Activated T-helper 2 cell treated with anti-CD3 and anti-CD28 coated beads, Interferon-gamma antibody, Interleukin-2, Interleukin-4, amounts not matched to agents 10 μg/mL and 5 μg/mL and 100 μg/mL, durations not matched to agents 14 hours and 24 hours and 36 hours (primary cell): ENCODE measurements at regions of chr12 and their contacts with region 1.

Region 1: GRCh38 chr12:70733385-70733784 is 96.2 kb upstream of the PTPRB start:
- DNase-seq: no peak
- H3K4me3 Mint-ChIP-seq: no peak overlapping the region
- H3K27ac Mint-ChIP-seq: no peak overlapping the region
- H3K4me1 Mint-ChIP-seq: no peaks in the 10 kb centered on the region
- H3K27me3 Mint-ChIP-seq: peaks cover 4% of the 10 kb centered on the region

Region 2: GRCh38 chr12:69879041-69879960 is 854.1 kb before region 1 on chr12:
- intact Hi-C with region 1: loop called (anchors 5 kb)
- DNase-seq: peak; percentile 43
- H3K4me3 Mint-ChIP-seq: no peak overlapping the region
- H3K27ac Mint-ChIP-seq: no peak overlapping the region
- H3K4me1 Mint-ChIP-seq: no peaks in the 10 kb centered on the region
- H3K27me3 Mint-ChIP-seq: peaks cover 15% of the 10 kb centered on the region

Region 3: GRCh38 chr12:70849265-70849960 is 116.0 kb after region 1 on chr12:
- intact Hi-C with region 1: loop called (anchors 1 kb)
- DNase-seq: no peak
- H3K4me3 Mint-ChIP-seq: no peak overlapping the region
- H3K27ac Mint-ChIP-seq: no peak overlapping the region
- H3K4me1 Mint-ChIP-seq: no peaks in the 10 kb centered on the region
- H3K27me3 Mint-ChIP-seq: no peaks in the 10 kb centered on the region

Region 4: GRCh38 chr12:71392521-71393145 is 659.2 kb after region 1 on chr12:
- intact Hi-C with region 1: loop called (anchors 5 kb)
- DNase-seq: no peak
- H3K4me3 Mint-ChIP-seq: no peak overlapping the region
- H3K27ac Mint-ChIP-seq: no peak overlapping the region
- H3K4me1 Mint-ChIP-seq: peaks cover 3% of the 10 kb centered on the region
- H3K27me3 Mint-ChIP-seq: no peaks in the 10 kb centered on the region